ENCODE measurements at regions of chr1 and their contacts with region 1.

Region 1: DNA sequence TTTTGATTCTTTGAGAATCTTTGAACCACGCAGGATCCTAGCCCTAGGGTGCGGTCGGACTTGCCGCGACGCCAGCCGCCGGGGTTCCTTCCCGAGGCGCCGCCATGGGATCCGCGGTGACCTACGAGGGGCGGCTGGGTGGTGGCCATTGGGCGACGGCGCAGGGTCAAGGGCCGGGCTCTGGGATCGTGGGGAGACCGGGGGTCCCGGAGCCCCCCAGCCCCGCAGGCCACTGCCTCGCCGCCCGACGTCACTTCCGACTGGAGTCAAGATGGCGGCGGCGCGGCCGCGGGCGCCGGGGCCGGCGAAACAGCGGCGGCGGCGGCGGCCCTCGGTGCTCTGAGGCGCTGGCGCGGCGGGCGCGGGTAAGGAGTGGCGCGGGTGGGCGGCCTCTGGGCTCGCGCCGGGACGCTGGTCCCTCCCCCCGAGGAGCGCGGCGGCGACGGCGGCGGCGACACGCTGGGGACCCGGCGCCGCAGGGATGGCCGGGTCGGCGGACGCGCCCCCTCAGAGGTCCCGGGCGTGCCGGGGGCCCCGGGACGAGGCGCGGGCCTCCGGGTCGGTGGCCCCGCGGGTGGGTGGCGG is at the start of gene PRDM2:
- DNase-seq: peak; percentile 70
- H3K4me3 ChIP-seq: peak within 1 kb of the TSS; percentile 84
- H3K27ac ChIP-seq: peak within 1 kb of the TSS; percentile 91
- H3K4me1 ChIP-seq: peaks cover 45% of the 10 kb centered on the region
- CTCF ChIP-seq: no peak
- total RNA-seq, gene PRDM2: 38.7 and 47.6 TPM in 2 replicates

Region 2: GRCh38 chr1:13583966-13584791 is 115.8 kb before region 1 on chr1:
- CTCF ChIA-PET with region 1: no interaction called
- POLR2A ChIA-PET with region 1: no interaction called
- intact Hi-C with region 1: no loop called
- DNase-seq: no peak
- H3K4me3 ChIP-seq: no peak overlapping the region
- H3K27ac ChIP-seq: no peak overlapping the region
- H3K4me1 ChIP-seq: no peaks in the 10 kb centered on the region
- CTCF ChIP-seq: no peak

Region 3: DNA sequence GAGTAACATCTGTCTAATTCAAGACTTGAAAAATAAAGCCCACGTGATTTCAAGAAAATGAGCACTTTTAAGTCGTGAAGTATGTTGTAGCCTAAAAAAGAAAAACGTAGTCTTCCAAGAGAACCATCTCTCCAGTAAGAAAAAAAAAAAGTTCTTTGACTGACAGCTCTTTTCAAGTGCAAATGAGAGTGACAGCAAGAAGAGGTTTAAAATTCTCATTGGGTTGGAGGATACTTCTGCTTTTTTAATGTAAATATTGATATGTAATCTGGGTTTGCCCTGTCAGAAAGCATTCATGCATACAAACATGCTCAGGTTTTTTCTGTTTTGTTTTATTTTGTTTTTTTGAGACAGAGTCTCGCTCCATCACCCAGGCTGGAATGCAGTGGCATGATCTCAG is 32.3 kb before region 1 on chr1:
- CTCF ChIA-PET with region 1: no interaction called
- POLR2A ChIA-PET with region 1: no interaction called
- intact Hi-C with region 1: loop called (anchors 2 kb)
- DNase-seq: peak; percentile 79
- H3K4me3 ChIP-seq: peak overlapping the region; percentile 15
- H3K27ac ChIP-seq: peak overlapping the region; percentile 46
- H3K4me1 ChIP-seq: peaks cover 48% of the 10 kb centered on the region
- CTCF ChIP-seq: no peak

Region 4: GRCh38 chr1:13714851-13715250 is 14.8 kb after region 1 on chr1:
- CTCF ChIA-PET with region 1: no interaction called
- POLR2A ChIA-PET with region 1: interaction called, 46 read pairs
- intact Hi-C with region 1: no loop called
- DNase-seq: no peak
- H3K4me3 ChIP-seq: no peak overlapping the region
- H3K27ac ChIP-seq: no peak overlapping the region
- H3K4me1 ChIP-seq: peaks cover 38% of the 10 kb centered on the region
- CTCF ChIP-seq: peak; percentile 56

Region 5: GRCh38 chr1:13725714-13726175 is 25.7 kb after region 1 on chr1:
- CTCF ChIA-PET with region 1: interaction called, 8 read pairs
- POLR2A ChIA-PET with region 1: interaction called, 43 read pairs
- intact Hi-C with region 1: no loop called
- DNase-seq: peak; percentile 78
- H3K4me3 ChIP-seq: no peak overlapping the region
- H3K27ac ChIP-seq: peak overlapping the region; percentile 22
- H3K4me1 ChIP-seq: peaks cover 58% of the 10 kb centered on the region
- CTCF ChIP-seq: peak; percentile 90

Region 6: DNA sequence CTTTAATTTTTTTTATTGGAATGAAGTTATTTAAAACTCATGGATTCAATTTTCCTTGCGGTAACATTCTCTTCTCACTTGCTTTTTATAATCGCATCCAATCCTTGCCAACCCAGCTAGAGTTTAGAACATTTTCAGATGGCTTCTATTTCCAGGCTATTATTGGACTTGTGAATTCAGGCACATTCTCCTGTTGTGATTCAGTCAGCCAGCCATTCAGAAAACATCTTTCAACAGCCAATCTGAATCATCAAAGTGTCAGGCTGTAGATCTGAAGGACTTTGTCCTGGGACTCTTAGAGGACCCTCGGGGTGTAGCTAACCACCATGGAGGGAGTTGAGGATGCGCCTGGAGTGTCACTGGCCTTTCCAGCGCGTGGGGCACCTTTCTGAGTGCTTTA is 92.4 kb after region 1 on chr1:
- CTCF ChIA-PET with region 1: no interaction called
- POLR2A ChIA-PET with region 1: no interaction called
- intact Hi-C with region 1: no loop called
- DNase-seq: no peak
- H3K4me3 ChIP-seq: no peak overlapping the region
- H3K27ac ChIP-seq: no peak overlapping the region
- H3K4me1 ChIP-seq: peaks cover 11% of the 10 kb centered on the region
- CTCF ChIP-seq: no peak